ENCODE measurements at regions of chr5 and their contacts with region 1.

Region 1: GRCh38 chr5:36414869-36415282 is 113.2 kb upstream of the RANBP3L start:
- DNase-seq: peak; percentile 9
- H3K4me3 Mint-ChIP-seq: no peak overlapping the region
- H3K27ac Mint-ChIP-seq: no peak overlapping the region
- H3K4me1 Mint-ChIP-seq: peaks cover 8% of the 10 kb centered on the region
- H3K27me3 Mint-ChIP-seq: peaks cover 21% of the 10 kb centered on the region
- CTCF ChIP-seq: no peak

Region 2: DNA sequence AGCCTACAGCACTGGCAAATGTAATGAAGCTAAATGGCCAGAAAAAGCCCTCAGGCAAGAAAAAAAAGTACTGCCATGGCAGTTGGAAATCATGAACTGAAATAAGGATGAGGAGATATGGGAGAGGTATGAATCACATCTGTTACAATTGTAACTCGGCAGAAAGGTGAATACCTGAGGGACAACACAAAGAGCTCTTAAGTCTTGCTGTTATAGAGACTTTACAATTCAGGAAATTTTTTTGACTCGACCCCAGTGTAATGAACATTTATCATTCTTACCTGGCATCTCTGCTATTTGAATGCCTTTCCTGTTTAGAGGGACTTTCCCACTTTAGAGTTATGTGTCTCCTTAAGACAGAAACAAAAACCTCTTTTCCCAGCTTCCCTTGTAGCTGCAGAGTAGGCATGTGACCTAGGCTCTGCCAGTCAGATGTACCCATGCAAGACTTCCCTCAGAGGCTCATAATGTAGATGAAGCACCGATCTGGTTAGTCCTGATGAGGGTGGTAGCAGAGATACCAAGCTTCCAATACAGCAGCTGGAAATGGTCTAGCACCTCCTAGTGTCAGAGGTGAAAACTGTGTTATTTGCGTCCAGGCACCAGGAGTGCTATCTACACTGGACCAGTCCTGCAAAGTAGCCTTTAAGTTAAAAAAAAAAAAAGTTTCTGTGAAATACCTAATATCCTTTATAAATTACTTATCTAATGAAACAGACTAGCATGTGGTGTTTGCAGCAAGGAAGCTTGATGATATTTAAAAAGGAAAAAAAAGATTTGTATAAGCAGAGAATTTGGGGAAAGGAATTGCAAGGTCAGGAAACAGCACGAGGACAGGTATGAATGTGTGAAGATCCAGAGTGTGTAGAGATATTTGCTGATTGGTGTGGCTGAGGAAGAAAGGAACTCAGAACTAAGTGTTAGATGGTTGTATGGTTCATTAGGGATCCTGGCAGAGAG is 44.6 kb after region 1 on chr5:
- CTCF ChIA-PET with region 1: interaction called, 5 read pairs
- intact Hi-C with region 1: loop called (anchors 5 kb)
- DNase-seq: peak; percentile 17
- H3K4me3 Mint-ChIP-seq: no peak overlapping the region
- H3K27ac Mint-ChIP-seq: no peak overlapping the region
- H3K4me1 Mint-ChIP-seq: peaks cover 7% of the 10 kb centered on the region
- H3K27me3 Mint-ChIP-seq: no peaks in the 10 kb centered on the region
- CTCF ChIP-seq: peak; percentile 47

Region 3: GRCh38 chr5:36507332-36507952 is 92.6 kb after region 1 on chr5:
- CTCF ChIA-PET with region 1: interaction called, 6 read pairs
- intact Hi-C with region 1: loop called (anchors 1 kb)
- DNase-seq: peak; percentile 85
- H3K4me3 Mint-ChIP-seq: no peak overlapping the region
- H3K27ac Mint-ChIP-seq: no peak overlapping the region
- H3K4me1 Mint-ChIP-seq: peaks cover 7% of the 10 kb centered on the region
- H3K27me3 Mint-ChIP-seq: peaks cover 42% of the 10 kb centered on the region
- CTCF ChIP-seq: peak; percentile 82

Region 4: DNA sequence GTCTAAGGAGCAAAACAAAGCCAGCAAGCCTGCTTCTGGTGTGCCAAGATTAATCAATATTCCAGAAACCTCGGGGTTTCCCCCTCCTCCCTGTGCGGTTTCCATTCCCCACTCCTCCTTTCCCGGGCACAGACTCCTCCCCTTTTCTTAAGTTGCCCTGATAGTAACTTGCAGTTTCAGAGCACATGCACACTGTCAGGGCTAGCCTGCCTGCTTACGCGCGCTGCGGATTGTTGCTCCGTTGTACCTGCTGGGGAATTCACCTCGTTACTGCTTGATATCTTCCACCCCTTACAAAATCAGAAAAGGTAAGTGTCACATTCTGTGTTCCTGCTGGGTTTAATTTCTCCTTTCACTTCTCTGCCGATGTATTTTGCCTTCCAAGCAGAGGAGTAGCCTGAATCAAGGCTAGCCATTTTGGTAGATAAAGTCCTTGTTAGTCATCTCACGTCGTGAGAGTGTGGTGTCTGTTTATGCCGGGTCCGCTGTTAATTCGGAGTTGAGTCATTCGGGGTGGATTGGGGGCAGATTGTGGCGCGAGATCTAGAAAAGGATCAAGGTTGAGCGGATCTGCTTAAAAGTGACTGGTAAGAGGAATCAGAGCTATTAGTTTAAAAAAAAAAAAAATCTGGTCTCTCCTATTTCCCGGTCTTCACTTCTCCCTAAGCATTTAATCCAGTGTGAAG is 191.7 kb after region 1 on chr5 and contains the start of gene SLC1A3:
- CTCF ChIA-PET with region 1: no interaction called
- intact Hi-C with region 1: loop called (anchors 5 kb)
- DNase-seq: peak; percentile 70
- H3K4me3 Mint-ChIP-seq: peak within 1 kb of the TSS; percentile 96
- H3K27ac Mint-ChIP-seq: peak within 1 kb of the TSS; percentile 78
- H3K4me1 Mint-ChIP-seq: no peaks in the 10 kb centered on the region
- H3K27me3 Mint-ChIP-seq: peaks cover 13% of the 10 kb centered on the region
- CTCF ChIP-seq: no peak
- total RNA-seq, gene SLC1A3: 6.0 and 7.9 TPM in 2 replicates